ENCODE measurements at regions of chr11 and their contacts with region 1.

Region 1: DNA sequence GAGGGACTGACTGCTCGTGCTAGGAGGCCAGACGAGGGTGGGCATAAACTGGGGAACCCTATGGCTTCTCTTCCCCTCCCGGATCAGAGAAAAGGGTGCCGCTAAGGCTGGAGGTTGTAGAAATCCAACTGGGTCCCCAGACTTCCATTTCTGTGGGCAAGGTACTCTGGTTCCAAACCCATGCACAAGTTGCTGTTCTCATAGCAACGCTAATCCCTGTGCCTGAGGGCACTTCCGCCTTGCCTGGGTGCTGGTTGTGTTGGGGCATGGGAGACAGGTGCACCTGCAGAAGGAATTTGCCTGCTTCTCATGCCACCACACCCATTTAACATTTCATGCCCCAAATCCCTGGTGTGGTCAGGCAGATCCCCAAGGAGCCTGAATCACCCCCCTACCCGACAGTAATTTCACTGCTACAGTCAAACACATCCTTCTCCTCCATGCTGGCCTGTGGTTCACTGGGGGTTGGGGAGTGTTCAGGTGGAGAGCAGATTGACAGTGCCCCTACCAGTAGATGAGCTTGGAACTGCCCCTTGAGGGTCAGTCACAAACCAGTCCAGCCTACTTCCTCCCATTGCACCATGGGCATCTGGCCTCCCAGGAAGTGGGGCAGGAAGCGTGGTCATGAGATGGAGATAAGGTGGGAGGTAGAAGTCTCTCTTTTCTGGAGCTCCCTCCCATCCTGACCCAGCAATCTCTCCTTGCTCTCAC is 1.2 kb downstream of the C2CD2L start:
- DNase-seq: no peak
- ATAC-seq: peak; percentile 14; the same call in 1 of the 2 replicates
- H3K4me3 ChIP-seq: peak overlapping the region; percentile 75 to 92
- H3K27ac ChIP-seq: peak overlapping the region; percentile 49
- H3K4me1 ChIP-seq: peaks cover 24% of the 10 kb centered on the region
- H3K27me3 ChIP-seq: no peaks in the 10 kb centered on the region
- CTCF ChIP-seq: no peak

Region 2: GRCh38 chr11:118928108-118928870 is 180.0 kb before region 1 on chr11:
- CTCF ChIA-PET with region 1: no interaction called
- POLR2A ChIA-PET with region 1: no interaction called
- in situ Hi-C with region 1: no loop called
- intact Hi-C with region 1: no loop called
- DNase-seq: peak; percentile 97
- ATAC-seq: peak; percentile 76
- H3K4me3 ChIP-seq: peak overlapping the region; percentile 68 to 72
- H3K27ac ChIP-seq: peak overlapping the region; percentile 97
- H3K4me1 ChIP-seq: peaks cover 25% of the 10 kb centered on the region
- H3K27me3 ChIP-seq: no peaks in the 10 kb centered on the region
- CTCF ChIP-seq: peak; percentile 99

Region 3: GRCh38 chr11:118975771-118976709 is 132.3 kb before region 1 on chr11:
- CTCF ChIA-PET with region 1: no interaction called
- POLR2A ChIA-PET with region 1: no interaction called
- in situ Hi-C with region 1: no loop called
- intact Hi-C with region 1: no loop called
- DNase-seq: no peak
- ATAC-seq: no peak
- H3K4me3 ChIP-seq: no peak overlapping the region
- H3K27ac ChIP-seq: no peak overlapping the region
- H3K4me1 ChIP-seq: no peaks in the 10 kb centered on the region
- H3K27me3 ChIP-seq: no peaks in the 10 kb centered on the region
- CTCF ChIP-seq: no peak

Region 4: GRCh38 chr11:119120639-119121007 is 12.3 kb after region 1 on chr11:
- CTCF ChIA-PET with region 1: interaction called, 7 read pairs
- POLR2A ChIA-PET with region 1: interaction called, 13 read pairs
- in situ Hi-C with region 1: no loop called
- intact Hi-C with region 1: no loop called
- DNase-seq: no peak
- ATAC-seq: no peak
- H3K4me3 ChIP-seq: peak overlapping the region; percentile 79 to 87
- H3K27ac ChIP-seq: peak overlapping the region; percentile 96
- H3K4me1 ChIP-seq: peaks cover 12% of the 10 kb centered on the region
- H3K27me3 ChIP-seq: no peaks in the 10 kb centered on the region
- CTCF ChIP-seq: no peak

Measured in Panc1 (cell line).